Naive thymus-derived CD4-positive, alpha-beta T cell (primary cell): ENCODE measurements at regions of chr13 and their contacts with region 1.

Region 1: DNA sequence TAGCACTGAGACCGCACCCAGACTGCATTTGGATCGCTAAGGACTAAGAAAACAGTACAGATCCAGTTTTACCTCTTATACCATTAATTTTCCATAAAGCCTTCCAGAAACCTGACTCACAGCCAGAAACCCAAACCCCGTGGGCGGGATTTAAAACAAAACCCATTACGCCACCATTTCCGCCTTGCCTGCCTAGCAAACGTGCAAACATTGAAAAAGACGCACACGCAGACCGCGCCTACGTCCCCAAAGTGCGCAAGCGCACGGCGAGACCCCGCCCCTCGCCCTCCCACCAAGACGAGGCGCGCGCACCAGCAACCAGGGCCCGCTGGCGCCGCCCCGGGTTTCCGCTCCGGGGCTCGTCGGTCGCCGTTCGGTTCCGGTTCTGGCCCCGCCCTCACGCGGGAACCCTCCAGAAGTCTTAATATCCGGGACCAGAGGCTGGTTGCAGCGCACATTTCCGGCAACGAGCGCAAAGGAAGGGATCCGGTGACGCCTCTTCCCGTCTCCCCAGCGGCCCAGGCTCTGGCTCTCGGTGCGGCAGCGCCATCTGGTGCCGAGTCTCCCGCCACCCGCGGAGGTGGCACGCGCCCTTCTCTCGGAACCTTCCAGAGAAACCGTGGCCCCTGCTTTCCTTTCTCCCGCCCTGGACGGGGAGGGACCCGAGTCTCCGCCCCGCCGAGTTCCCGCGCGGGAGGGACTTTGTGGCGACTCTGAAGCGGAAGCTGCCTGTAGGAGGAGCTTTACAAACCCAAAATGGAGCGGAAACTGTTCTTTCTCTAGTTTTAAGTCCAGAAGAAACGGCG is 256.9 kb upstream of the STARD13 start:
- DNase-seq: peak; percentile 98 to 100 (median 99)
- ATAC-seq: peak; percentile 89
- H3K4me3 ChIP-seq: peak overlapping the region; percentile 85
- H3K4me3 Mint-ChIP-seq: peak overlapping the region; percentile 86 to 98 (median 95)
- H3K27ac ChIP-seq: peak overlapping the region; percentile 99
- H3K27ac Mint-ChIP-seq: peak overlapping the region; percentile 98 to 100 (median 100)
- H3K4me1 ChIP-seq: peaks cover 27 to 35% of the 10 kb centered on the region in 2 donors
- H3K4me1 Mint-ChIP-seq: peaks cover 24 to 64% (median 49%) of the 10 kb centered on the region in 7 donors
- H3K27me3 ChIP-seq: no peaks in the 10 kb centered on the region
- H3K27me3 Mint-ChIP-seq: no peaks in the 10 kb centered on the region

Region 2: GRCh38 chr13:32267836-32268439 is 1274.5 kb before region 1 on chr13:
- CTCF ChIA-PET with region 1: no interaction called
- POLR2A ChIA-PET with region 1: no interaction called
- intact Hi-C with region 1: loop called in 1 of 2 experiments (anchors 5 kb)
- DNase-seq: peak; percentile 13 to 56 (median 35)
- ATAC-seq: peak; percentile 76
- H3K4me3 ChIP-seq: no peak overlapping the region
- H3K4me3 Mint-ChIP-seq: no peak overlapping the region
- H3K27ac ChIP-seq: no peak overlapping the region
- H3K27ac Mint-ChIP-seq: peak overlapping the region in 1 of 9 donors; percentile 46
- H3K4me1 ChIP-seq: no peaks in the 10 kb centered on the region
- H3K4me1 Mint-ChIP-seq: no peaks in the 10 kb centered on the region
- H3K27me3 ChIP-seq: no peaks in the 10 kb centered on the region
- H3K27me3 Mint-ChIP-seq: no peaks in the 10 kb centered on the region

Region 3: DNA sequence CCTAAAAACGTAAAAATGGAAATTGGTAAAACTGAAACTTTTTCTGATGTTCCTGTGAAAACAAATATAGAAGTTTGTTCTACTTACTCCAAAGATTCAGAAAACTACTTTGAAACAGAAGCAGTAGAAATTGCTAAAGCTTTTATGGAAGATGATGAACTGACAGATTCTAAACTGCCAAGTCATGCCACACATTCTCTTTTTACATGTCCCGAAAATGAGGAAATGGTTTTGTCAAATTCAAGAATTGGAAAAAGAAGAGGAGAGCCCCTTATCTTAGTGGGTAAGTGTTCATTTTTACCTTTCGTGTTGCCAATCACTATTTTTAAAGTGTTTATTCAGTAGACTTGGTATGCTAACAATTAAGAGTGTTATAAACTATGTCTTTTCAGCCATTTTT is 1201.6 kb before region 1 on chr13:
- CTCF ChIA-PET with region 1: no interaction called
- POLR2A ChIA-PET with region 1: no interaction called
- intact Hi-C with region 1: no loop called
- DNase-seq: no peak
- ATAC-seq: no peak
- H3K4me3 ChIP-seq: no peak overlapping the region
- H3K4me3 Mint-ChIP-seq: no peak overlapping the region
- H3K27ac ChIP-seq: no peak overlapping the region
- H3K27ac Mint-ChIP-seq: no peak overlapping the region
- H3K4me1 ChIP-seq: no peaks in the 10 kb centered on the region
- H3K4me1 Mint-ChIP-seq: no peaks in the 10 kb centered on the region
- H3K27me3 ChIP-seq: no peaks in the 10 kb centered on the region
- H3K27me3 Mint-ChIP-seq: no peaks in the 10 kb centered on the region

Region 4: GRCh38 chr13:32538621-32539246 is 1003.8 kb before region 1 on chr13 and contains the start of gene N4BP2L2:
- CTCF ChIA-PET with region 1: no interaction called
- POLR2A ChIA-PET with region 1: interaction called, 8 read pairs
- intact Hi-C with region 1: loop called (anchors 1 kb)
- DNase-seq: peak; percentile 70 to 94 (median 91)
- ATAC-seq: peak; percentile 98
- H3K4me3 ChIP-seq: peak within 1 kb of the TSS; percentile 78
- H3K4me3 Mint-ChIP-seq: peak within 1 kb of the TSS; percentile 94 to 100 (median 100)
- H3K27ac ChIP-seq: peak within 1 kb of the TSS; percentile 96
- H3K27ac Mint-ChIP-seq: peak within 1 kb of the TSS; percentile 99 to 100 (median 100)
- H3K4me1 ChIP-seq: peaks cover 32 to 39% of the 10 kb centered on the region in 2 donors
- H3K4me1 Mint-ChIP-seq: peaks cover 33 to 56% (median 50%) of the 10 kb centered on the region in 7 donors
- H3K27me3 ChIP-seq: no peaks in the 10 kb centered on the region
- H3K27me3 Mint-ChIP-seq: peaks cover 0 to 11% (median 3%) of the 10 kb centered on the region in 5 donors
- total RNA-seq, gene N4BP2L2: 136 to 358 (median 226) TPM

Region 5: GRCh38 chr13:32737111-32737571 is 805.3 kb before region 1 on chr13:
- CTCF ChIA-PET with region 1: no interaction called
- POLR2A ChIA-PET with region 1: no interaction called
- intact Hi-C with region 1: loop called (anchors 1 to 5 kb)
- DNase-seq: peak in 7 of 9 donors; percentile 38 to 66 (median 59)
- ATAC-seq: peak; percentile 88
- H3K4me3 ChIP-seq: peak overlapping the region; percentile 28
- H3K4me3 Mint-ChIP-seq: peak overlapping the region; percentile 58 to 93 (median 86)
- H3K27ac ChIP-seq: peak overlapping the region; percentile 77
- H3K27ac Mint-ChIP-seq: peak overlapping the region; percentile 87 to 98 (median 94)
- H3K4me1 ChIP-seq: peaks cover 8 to 22% of the 10 kb centered on the region in 2 donors
- H3K4me1 Mint-ChIP-seq: peaks cover 17 to 64% (median 51%) of the 10 kb centered on the region in 7 donors
- H3K27me3 ChIP-seq: no peaks in the 10 kb centered on the region
- H3K27me3 Mint-ChIP-seq: no peaks in the 10 kb centered on the region

Region 6: GRCh38 chr13:33033051-33033812 is 509.3 kb before region 1 on chr13:
- CTCF ChIA-PET with region 1: no interaction called
- POLR2A ChIA-PET with region 1: interaction called, 3 read pairs
- intact Hi-C with region 1: loop called in 1 of 2 experiments (anchors 1 kb)
- DNase-seq: peak in 6 of 9 donors; percentile 22 to 45 (median 36)
- ATAC-seq: peak; percentile 71
- H3K4me3 ChIP-seq: peak overlapping the region; percentile 47
- H3K4me3 Mint-ChIP-seq: peak overlapping the region; percentile 81 to 94 (median 87)
- H3K27ac ChIP-seq: peak overlapping the region; percentile 42
- H3K27ac Mint-ChIP-seq: peak overlapping the region; percentile 68 to 97 (median 85)
- H3K4me1 ChIP-seq: peaks cover 0 to 6% of the 10 kb centered on the region in 2 donors
- H3K4me1 Mint-ChIP-seq: peaks cover 9 to 16% (median 13%) of the 10 kb centered on the region in 7 donors
- H3K27me3 ChIP-seq: no peaks in the 10 kb centered on the region
- H3K27me3 Mint-ChIP-seq: peaks cover 0 to 33% (median 9%) of the 10 kb centered on the region in 5 donors

Region 7: GRCh38 chr13:33678906-33679657 is 136.6 kb after region 1 on chr13:
- CTCF ChIA-PET with region 1: no interaction called
- POLR2A ChIA-PET with region 1: no interaction called
- intact Hi-C with region 1: loop called in 1 of 2 experiments (anchors 1 kb)
- DNase-seq: peak in 1 of 9 donors; percentile 76
- ATAC-seq: peak; percentile 86
- H3K4me3 ChIP-seq: peak overlapping the region; percentile 29
- H3K4me3 Mint-ChIP-seq: peak overlapping the region in 5 of 10 donors; percentile 16 to 64 (median 49)
- H3K27ac ChIP-seq: no peak overlapping the region
- H3K27ac Mint-ChIP-seq: peak overlapping the region in 2 of 9 donors; percentile 76 to 91
- H3K4me1 ChIP-seq: peaks cover 0 to 11% of the 10 kb centered on the region in 2 donors
- H3K4me1 Mint-ChIP-seq: peaks cover 7 to 26% (median 11%) of the 10 kb centered on the region in 7 donors
- H3K27me3 ChIP-seq: no peaks in the 10 kb centered on the region
- H3K27me3 Mint-ChIP-seq: peaks cover 0 to 8% (median 0%) of the 10 kb centered on the region in 5 donors

Region 8: DNA sequence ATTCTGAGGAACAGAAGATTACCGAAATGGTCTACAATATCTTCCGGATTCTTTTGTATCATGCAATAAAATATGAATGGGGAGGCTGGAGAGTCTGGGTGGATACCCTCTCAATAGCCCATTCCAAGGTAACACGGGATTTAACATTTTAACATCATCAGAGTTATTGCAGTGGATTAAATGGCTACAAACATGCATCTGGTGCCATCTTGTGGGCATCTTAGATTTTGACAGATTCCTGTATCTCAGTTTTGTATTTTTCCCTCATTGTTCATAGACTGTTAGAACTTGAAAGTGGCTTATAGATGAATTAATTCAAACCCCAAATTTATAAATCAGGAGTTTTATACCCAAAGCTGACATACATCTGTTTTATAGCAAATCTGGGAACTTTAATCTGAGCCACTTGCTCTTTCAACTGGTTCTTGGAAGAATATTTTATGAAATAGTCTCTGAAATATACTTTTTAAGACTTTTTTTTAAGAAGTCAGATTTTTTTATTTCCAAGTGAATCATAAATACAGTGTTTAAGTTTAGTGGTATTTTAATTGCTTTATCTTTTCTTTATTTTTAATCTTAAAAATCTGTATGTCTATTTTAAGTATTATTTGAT is 1614.8 kb after region 1 on chr13:
- CTCF ChIA-PET with region 1: no interaction called
- POLR2A ChIA-PET with region 1: no interaction called
- intact Hi-C with region 1: loop called (anchors 1 to 10 kb)
- DNase-seq: peak in 5 of 9 donors; percentile 20 to 46 (median 30)
- ATAC-seq: no peak
- H3K4me3 ChIP-seq: no peak overlapping the region
- H3K4me3 Mint-ChIP-seq: no peak overlapping the region
- H3K27ac ChIP-seq: no peak overlapping the region
- H3K27ac Mint-ChIP-seq: no peak overlapping the region
- H3K4me1 ChIP-seq: no peaks in the 10 kb centered on the region
- H3K4me1 Mint-ChIP-seq: peaks cover under 1 to 15% (median 4%) of the 10 kb centered on the region in 7 donors
- H3K27me3 ChIP-seq: no peaks in the 10 kb centered on the region
- H3K27me3 Mint-ChIP-seq: peaks cover 0 to 3% (median 0%) of the 10 kb centered on the region in 5 donors